ENCODE measurements at regions of chr2 and their contacts with region 1.

Region 1: DNA sequence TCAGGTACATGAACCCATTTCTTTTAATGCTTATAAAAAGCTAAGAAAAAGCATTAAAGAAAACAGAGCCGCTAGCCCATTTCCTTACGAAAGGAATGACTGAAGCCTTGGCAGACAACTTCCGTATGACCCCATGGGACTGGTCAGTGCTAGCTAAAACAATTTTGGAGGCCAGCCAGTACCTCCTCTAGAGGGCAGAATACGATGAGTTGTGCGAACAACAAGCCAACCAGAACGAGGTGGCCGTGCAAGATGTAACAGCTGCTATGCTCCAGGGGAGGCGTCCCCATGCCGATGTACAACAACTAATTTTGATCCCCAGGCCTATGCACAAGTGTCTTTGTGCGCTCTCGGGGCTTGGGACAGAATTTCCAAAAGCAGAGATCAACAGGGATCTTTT is 16.7 kb downstream of the MAP3K2 start:
- DNase-seq: peak; percentile 64

Region 2: GRCh38 chr2:127479219-127479825 is 108.3 kb after region 1 on chr2:
- CTCF ChIA-PET with region 1: interaction called, 10 read pairs
- POLR2A ChIA-PET with region 1: no interaction called
- DNase-seq: peak; percentile 49

Measured in HEK293T (cell line).